ENCODE measurements at regions of chr4 and their contacts with region 1.

Region 1: GRCh38 chr4:1809754-1810511 is 16.8 kb downstream of the FGFR3 start:
- DNase-seq: no peak
- H3K4me3 ChIP-seq: no peak overlapping the region
- H3K27me3 ChIP-seq: no peaks in the 10 kb centered on the region
- CTCF ChIP-seq: peak; percentile 93

Region 2: DNA sequence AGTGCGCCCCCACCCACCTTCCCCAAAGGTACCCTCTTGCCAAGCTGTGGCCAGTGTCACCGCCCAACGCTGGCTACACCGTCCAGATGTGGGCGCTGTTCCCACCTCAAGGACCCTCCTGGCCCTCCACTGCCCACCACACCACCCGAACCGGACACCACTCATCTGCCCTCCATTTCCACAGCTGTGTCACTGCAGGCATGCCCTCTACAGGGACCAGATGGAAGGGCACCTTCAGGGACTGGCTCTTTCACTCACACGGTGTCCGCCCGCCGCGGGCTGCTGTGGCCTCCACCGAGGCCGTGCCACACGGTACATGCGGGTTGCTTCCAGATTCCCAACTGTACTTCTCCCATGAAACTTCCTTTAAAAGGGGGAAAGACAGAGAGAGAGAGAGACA is 213.5 kb before region 1 on chr4:
- CTCF ChIA-PET with region 1: no interaction called
- POLR2A ChIA-PET with region 1: no interaction called
- DNase-seq: no peak
- H3K4me3 ChIP-seq: no peak overlapping the region
- H3K27me3 ChIP-seq: peaks cover 3% of the 10 kb centered on the region; the same call in 1 of the 2 replicates
- CTCF ChIP-seq: no peak

Region 3: GRCh38 chr4:1693129-1693896 is 116.6 kb before region 1 on chr4:
- CTCF ChIA-PET with region 1: interaction called, 10 read pairs
- POLR2A ChIA-PET with region 1: no interaction called
- DNase-seq: no peak
- H3K4me3 ChIP-seq: no peak overlapping the region
- H3K27me3 ChIP-seq: no peaks in the 10 kb centered on the region
- CTCF ChIP-seq: peak; percentile 96

Region 4: GRCh38 chr4:1777822-1778641 is 31.9 kb before region 1 on chr4:
- CTCF ChIA-PET with region 1: interaction called, 12 read pairs
- POLR2A ChIA-PET with region 1: no interaction called
- DNase-seq: peak; percentile 25
- H3K4me3 ChIP-seq: no peak overlapping the region
- H3K27me3 ChIP-seq: no peaks in the 10 kb centered on the region
- CTCF ChIP-seq: peak; percentile 45

Region 5: GRCh38 chr4:1793496-1793840 is 16.5 kb before region 1 on chr4:
- CTCF ChIA-PET with region 1: interaction called, 14 read pairs
- POLR2A ChIA-PET with region 1: no interaction called
- DNase-seq: no peak
- H3K4me3 ChIP-seq: peak overlapping the region; percentile 42
- H3K27me3 ChIP-seq: peaks cover 17% of the 10 kb centered on the region
- CTCF ChIP-seq: no peak

Region 6: DNA sequence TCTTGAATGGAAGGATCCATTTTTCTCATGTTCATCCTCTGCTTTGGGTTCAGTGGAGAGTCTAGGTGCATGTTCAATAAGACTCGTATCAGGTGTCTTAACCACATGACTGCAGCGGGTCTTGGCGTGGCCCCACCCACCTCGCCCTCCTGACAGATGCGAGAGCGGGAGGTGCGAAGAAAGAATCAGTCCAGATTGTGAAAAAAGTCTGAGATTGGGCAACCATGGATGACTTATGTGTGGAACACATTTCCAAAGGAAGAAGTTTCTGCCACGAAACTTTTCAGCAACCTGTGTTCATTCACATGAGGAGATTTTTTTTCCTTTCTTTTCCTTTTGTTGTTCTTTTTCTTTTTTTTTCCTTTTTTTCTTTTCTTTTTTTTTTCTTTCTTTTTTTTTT is 128.1 kb after region 1 on chr4:
- CTCF ChIA-PET with region 1: no interaction called
- POLR2A ChIA-PET with region 1: interaction called, 15 read pairs
- DNase-seq: no peak
- H3K4me3 ChIP-seq: no peak overlapping the region
- H3K27me3 ChIP-seq: no peaks in the 10 kb centered on the region
- CTCF ChIP-seq: no peak

Region 7: DNA sequence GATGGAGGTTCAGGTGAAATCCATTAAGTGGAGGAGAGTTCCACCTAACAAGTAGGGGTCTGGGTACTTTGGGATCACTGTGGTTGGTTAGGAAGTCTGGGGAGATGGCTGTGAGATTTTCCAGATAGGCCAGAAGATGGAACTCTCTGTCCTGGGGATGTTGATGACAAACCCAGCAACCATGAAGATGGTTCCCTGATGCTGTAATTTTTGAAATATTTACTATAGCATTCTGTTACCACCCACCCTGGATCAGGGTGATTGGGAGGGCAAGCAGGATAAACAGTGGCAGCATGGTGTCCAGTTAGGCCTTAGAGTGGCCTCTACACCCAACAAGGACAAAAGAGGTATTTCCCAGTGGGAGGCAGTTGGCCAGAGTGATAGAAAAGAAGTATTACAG is 214.8 kb after region 1 on chr4:
- CTCF ChIA-PET with region 1: no interaction called
- POLR2A ChIA-PET with region 1: no interaction called
- DNase-seq: no peak
- H3K4me3 ChIP-seq: no peak overlapping the region
- H3K27me3 ChIP-seq: no peaks in the 10 kb centered on the region; the same call in 1 of the 2 replicates
- CTCF ChIP-seq: no peak

Measured in BJ (cell line).